GM10248 (cell line): ENCODE measurements at regions of chr12 and their contacts with region 1.

Region 1: GRCh38 chr12:68358532-68359485 is 26.6 kb upstream of the MDM1 start:
- DNase-seq: peak; percentile 48
- CTCF ChIP-seq: peak; percentile 44

Region 2: GRCh38 chr12:68267892-68268396 is 90.9 kb before region 1 on chr12:
- CTCF ChIA-PET with region 1: no interaction called
- POLR2A ChIA-PET with region 1: no interaction called
- DNase-seq: no peak
- CTCF ChIP-seq: no peak

Region 3: GRCh38 chr12:68374307-68374982 is 15.6 kb after region 1 on chr12:
- CTCF ChIA-PET with region 1: interaction called, 39 read pairs
- POLR2A ChIA-PET with region 1: no interaction called
- DNase-seq: peak; percentile 67
- CTCF ChIP-seq: no peak

Region 4: GRCh38 chr12:68565375-68565903 is 206.6 kb after region 1 on chr12:
- CTCF ChIA-PET with region 1: no interaction called
- POLR2A ChIA-PET with region 1: no interaction called
- DNase-seq: no peak
- CTCF ChIP-seq: no peak